ENCODE measurements at regions of chr4 and their contacts with region 1.

Region 1: DNA sequence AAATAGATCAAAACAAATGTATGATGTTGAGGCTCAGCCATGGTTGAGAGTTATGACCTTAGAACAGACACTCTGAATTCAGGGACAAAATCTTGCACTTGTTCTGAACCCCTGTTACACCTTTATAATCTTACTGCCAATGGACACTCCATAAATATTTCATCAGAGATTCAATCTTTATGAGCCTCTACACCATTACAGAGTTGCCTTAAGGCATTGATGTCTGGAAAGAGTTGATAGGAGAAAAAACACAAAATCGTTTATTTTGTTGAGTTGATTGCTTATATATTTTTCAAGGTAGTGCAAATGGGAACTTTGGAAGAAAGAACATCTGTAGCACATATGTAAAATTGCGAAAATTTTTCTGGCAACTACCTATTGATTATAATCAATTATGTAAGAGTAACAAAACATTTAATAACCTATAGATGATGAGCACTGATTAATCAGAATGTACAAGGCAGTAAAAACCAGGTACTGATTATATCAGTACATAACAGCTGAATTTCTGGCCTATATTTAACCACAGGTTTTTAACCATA is 568.5 kb downstream of the FSTL5 start:
- DNase-seq: no peak
- ATAC-seq: no peak
- H3K4me3 ChIP-seq: no peak overlapping the region
- H3K27ac ChIP-seq: no peak overlapping the region
- H3K4me1 ChIP-seq: no peaks in the 10 kb centered on the region
- H3K27me3 ChIP-seq: no peaks in the 10 kb centered on the region
- CTCF ChIP-seq: no peak
- EP300 ChIP-seq: no peak
- POLR2A ChIP-seq: no peak
- RAD21 ChIP-seq: no peak

Region 2: DNA sequence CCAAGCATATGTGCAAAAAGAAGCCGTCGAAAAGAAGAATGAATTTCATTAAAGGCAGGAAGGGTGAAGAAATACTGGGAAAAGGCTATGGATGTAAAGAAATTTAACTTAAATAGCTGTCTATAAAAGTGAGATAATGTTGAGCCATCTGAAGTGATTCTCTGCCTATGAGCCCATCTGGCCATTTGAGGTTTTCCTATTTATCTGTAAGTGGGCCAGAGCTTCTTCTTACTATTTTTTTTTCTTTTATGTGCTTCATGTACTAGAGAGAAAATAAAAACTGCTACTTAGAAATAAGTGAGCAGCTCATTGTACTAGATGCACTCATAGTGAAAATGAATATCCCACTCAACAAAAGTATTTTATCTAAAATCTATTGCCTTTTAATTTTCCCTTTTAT is 157.2 kb before region 1 on chr4:
- CTCF ChIA-PET with region 1: no interaction called
- POLR2A ChIA-PET with region 1: no interaction called
- in situ Hi-C with region 1: no loop called
- intact Hi-C with region 1: no loop called
- DNase-seq: no peak
- ATAC-seq: no peak
- H3K4me3 ChIP-seq: no peak overlapping the region
- H3K27ac ChIP-seq: no peak overlapping the region
- H3K4me1 ChIP-seq: no peaks in the 10 kb centered on the region
- H3K27me3 ChIP-seq: no peaks in the 10 kb centered on the region
- CTCF ChIP-seq: no peak
- EP300 ChIP-seq: no peak
- POLR2A ChIP-seq: no peak
- RAD21 ChIP-seq: no peak

Region 3: GRCh38 chr4:161919442-161920220 is 324.3 kb after region 1 on chr4:
- CTCF ChIA-PET with region 1: no interaction called
- POLR2A ChIA-PET with region 1: no interaction called
- in situ Hi-C with region 1: loop called (anchors 10 kb)
- intact Hi-C with region 1: no loop called
- DNase-seq: no peak
- ATAC-seq: no peak
- H3K4me3 ChIP-seq: no peak overlapping the region
- H3K27ac ChIP-seq: no peak overlapping the region
- H3K4me1 ChIP-seq: no peaks in the 10 kb centered on the region
- H3K27me3 ChIP-seq: no peaks in the 10 kb centered on the region
- CTCF ChIP-seq: no peak
- EP300 ChIP-seq: no peak
- POLR2A ChIP-seq: no peak
- RAD21 ChIP-seq: no peak

Measured in K562 (cell line).